Pancreas (tissue), 10 donors: ENCODE measurements at regions of chr4 and their contacts with region 1.

Region 1: GRCh38 chr4:15231265-15232091 is 196.4 kb upstream of the C1QTNF7 start:
- DNase-seq: peak in 5 of 6 donors; percentile 37 to 67 (median 61)
- ATAC-seq: peak; percentile 68 to 91 (median 91)
- H3K4me3 ChIP-seq: no peak overlapping the region
- H3K27ac ChIP-seq: no peak overlapping the region
- H3K4me1 ChIP-seq: no peaks in the 10 kb centered on the region
- H3K27me3 ChIP-seq: no peaks in the 10 kb centered on the region
- CTCF ChIP-seq: peak; percentile 31 to 48 (median 43)

Region 2: GRCh38 chr4:15173251-15173650 is 58.2 kb before region 1 on chr4:
- intact Hi-C with region 1: no loop called
- DNase-seq: no peak
- ATAC-seq: no peak
- H3K4me3 ChIP-seq: no peak overlapping the region
- H3K27ac ChIP-seq: no peak overlapping the region
- H3K4me1 ChIP-seq: no peaks in the 10 kb centered on the region
- H3K27me3 ChIP-seq: peaks cover 0 to 5% (median 0%) of the 10 kb centered on the region in 4 donors
- CTCF ChIP-seq: no peak

Region 3: GRCh38 chr4:15368856-15369255 is 137.4 kb after region 1 on chr4:
- intact Hi-C with region 1: no loop called
- DNase-seq: no peak
- ATAC-seq: peak in 1 of 4 donors; percentile 35
- H3K4me3 ChIP-seq: no peak overlapping the region
- H3K27ac ChIP-seq: no peak overlapping the region
- H3K4me1 ChIP-seq: no peaks in the 10 kb centered on the region
- H3K27me3 ChIP-seq: no peaks in the 10 kb centered on the region
- CTCF ChIP-seq: no peak

Region 4: GRCh38 chr4:15457406-15458201 is 226.1 kb after region 1 on chr4:
- intact Hi-C with region 1: loop called in 2 of 3 experiments (anchors 10 kb)
- DNase-seq: no peak
- ATAC-seq: peak in 3 of 4 donors; percentile 88 to 93 (median 91)
- H3K4me3 ChIP-seq: no peak overlapping the region
- H3K27ac ChIP-seq: no peak overlapping the region
- H3K4me1 ChIP-seq: peaks cover 0 to 4% (median 0%) of the 10 kb centered on the region in 3 donors
- H3K27me3 ChIP-seq: no peaks in the 10 kb centered on the region
- CTCF ChIP-seq: peak; percentile 45 to 67 (median 61)